Motor neuron (in vitro differentiated cells): ENCODE measurements at regions of chr6 and their contacts with region 1.

Region 1: DNA sequence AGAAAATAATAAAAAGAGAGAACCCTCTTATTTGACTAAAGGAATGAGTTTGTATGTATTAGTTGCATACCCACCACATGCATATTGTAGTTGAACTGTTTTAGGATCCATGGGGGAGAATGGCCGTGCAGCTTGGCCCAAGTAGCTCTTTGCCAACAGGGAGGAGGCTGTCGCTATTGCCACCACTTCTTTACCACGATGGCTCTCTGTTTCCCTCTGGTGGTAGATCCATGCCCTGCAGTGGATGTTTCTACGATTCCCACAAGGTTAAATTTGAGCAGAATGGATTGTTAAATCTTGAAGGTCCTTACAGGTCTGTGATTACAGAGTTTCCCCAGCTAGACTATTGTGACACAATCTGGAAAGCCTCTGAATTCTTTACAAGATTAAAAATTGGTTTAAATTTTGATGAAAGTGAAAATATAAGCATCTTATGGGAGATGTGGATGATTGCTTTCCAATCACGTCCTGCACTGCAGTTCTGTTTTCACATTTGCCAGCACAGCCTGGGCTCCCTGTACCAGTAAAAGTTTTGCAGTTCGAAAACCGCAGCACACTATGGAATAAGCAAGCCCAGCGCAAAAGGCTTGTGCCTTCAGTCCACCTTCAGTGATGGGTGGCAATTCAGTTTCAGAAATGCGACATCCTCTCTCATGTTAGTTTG is 34.4 kb upstream of the FNDC1 start:
- ATAC-seq: peak; percentile 36 to 78 (median 66)
- H3K4me3 ChIP-seq: no peak overlapping the region
- H3K27ac ChIP-seq: no peak overlapping the region
- H3K4me1 ChIP-seq: no peaks in the 10 kb centered on the region

Region 2: DNA sequence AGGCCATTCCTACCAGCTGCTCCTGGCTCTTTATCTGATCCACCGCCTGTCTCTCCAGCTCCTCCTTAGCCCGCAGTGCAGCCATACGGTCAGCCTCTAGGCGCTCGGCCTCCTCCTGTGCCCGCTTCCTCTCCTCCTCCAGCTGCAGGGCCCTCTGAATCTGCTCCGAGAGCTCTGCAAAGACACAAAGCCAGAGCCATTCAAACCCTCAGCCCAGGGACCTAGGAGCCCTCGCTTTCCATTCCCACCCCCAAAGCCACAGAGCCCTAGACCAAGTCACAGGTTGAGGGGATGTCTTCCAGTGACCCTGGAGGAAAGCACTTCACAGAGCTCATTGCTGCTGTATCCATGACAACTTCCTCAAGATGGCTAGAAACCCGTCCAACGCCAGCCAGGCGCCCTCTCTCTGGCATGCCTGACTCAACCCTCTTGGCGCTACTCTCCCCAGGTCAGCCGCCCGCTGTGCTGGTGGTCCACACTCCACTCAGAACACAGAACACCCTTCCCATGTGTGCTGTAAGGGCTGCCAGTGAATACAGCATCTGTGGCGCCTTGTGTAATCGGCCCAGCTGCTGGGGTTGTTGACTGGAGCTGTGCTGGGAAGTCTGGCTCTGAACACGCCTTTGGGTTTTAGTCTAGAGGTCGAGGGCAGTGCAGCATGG is 364.9 kb before region 1 on chr6:
- in situ Hi-C with region 1: no loop called
- ATAC-seq: peak in 2 of 8 experiments; percentile 29 to 51
- H3K4me3 ChIP-seq: no peak overlapping the region
- H3K27ac ChIP-seq: no peak overlapping the region
- H3K4me1 ChIP-seq: no peaks in the 10 kb centered on the region

Region 3: DNA sequence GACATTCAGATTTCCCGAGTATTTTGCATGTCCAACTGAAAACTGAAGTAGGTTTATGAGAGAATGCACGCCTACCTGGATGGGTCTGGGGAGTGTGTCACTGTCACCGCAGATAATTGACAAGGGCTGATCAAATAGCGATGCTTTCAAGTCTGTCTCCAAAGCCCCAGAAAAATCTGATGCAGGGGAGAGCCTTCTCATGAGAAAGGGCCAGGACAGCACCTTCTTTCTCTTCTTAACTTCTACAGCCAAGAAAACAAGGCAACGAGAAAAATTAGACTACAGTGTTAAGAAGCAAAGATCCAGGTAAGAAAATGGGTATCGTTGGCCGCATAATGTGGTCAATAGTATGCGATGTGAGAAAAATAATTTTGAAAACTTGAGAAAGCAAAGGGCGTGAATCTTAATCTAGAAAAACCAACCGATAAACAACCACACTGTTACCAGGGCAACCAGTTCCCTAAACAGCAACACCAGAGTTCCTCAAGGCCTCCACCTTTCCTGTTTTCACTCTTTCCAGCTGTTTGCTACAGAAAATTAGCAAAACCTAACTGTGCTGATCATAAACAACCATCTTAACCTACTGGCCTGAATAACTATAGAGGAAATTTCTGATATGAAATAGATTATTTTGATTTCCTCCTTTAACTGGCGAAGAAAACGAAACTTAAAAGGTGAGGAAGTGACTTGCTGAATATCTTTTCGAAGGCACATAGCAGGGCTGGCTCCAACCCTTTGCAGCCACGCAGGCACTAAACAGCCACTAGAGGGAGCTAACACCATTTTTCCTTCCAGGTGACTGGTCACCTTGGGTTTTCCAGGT is 92.6 kb before region 1 on chr6:
- in situ Hi-C with region 1: loop called in 1 of 9 experiments (anchors 25 kb)
- ATAC-seq: peak; percentile 59 to 80 (median 75)
- H3K4me3 ChIP-seq: no peak overlapping the region
- H3K27ac ChIP-seq: no peak overlapping the region
- H3K4me1 ChIP-seq: peaks cover 0 to 3% of the 10 kb centered on the region in 2 donors